ENCODE measurements at regions of chr6 and their contacts with region 1.

Region 1: GRCh38 chr6:17706580-17707370 is at the start of gene NUP153:
- DNase-seq: peak; percentile 94 to 100 (median 96)
- ATAC-seq: peak; percentile 78
- H3K4me3 ChIP-seq: peak within 1 kb of the TSS; percentile 80
- H3K27ac ChIP-seq: peak within 1 kb of the TSS; percentile 98
- H3K4me1 ChIP-seq: peaks cover 16 to 21% of the 10 kb centered on the region in 2 experiments
- H3K27me3 ChIP-seq: no peaks in the 10 kb centered on the region
- CTCF ChIP-seq: 0 out of 6 replicates have a peak, but pooled peaks of 1 of the 3 experiments have one; percentile 1
- EP300 ChIP-seq: peak; percentile 72
- POLR2A ChIP-seq: peak; percentile 83
- RAD21 ChIP-seq: peak; percentile 3 to 18; a peak in 1 of 4 replicates
- polyA plus RNA-seq, gene NUP153: 21.9 to 31.8 TPM

Region 2: GRCh38 chr6:17599885-17600526 is 106.8 kb before region 1 on chr6 and contains the start of gene FAM8A1:
- CTCF ChIA-PET with region 1: no interaction called
- POLR2A ChIA-PET with region 1: interaction called, 3 read pairs
- in situ Hi-C with region 1: no loop called
- intact Hi-C with region 1: loop called (anchors 2 kb)
- DNase-seq: peak; percentile 97 to 99 (median 98)
- ATAC-seq: peak; percentile 92
- H3K4me3 ChIP-seq: peak within 1 kb of the TSS; percentile 88
- H3K27ac ChIP-seq: peak within 1 kb of the TSS; percentile 91
- H3K4me1 ChIP-seq: peaks cover 5 to 18% of the 10 kb centered on the region in 2 experiments; a peak in 4 of 5 replicates
- H3K27me3 ChIP-seq: no peaks in the 10 kb centered on the region
- CTCF ChIP-seq: peak; percentile 60 to 82 (median 60); a peak in 5 of 6 replicates
- EP300 ChIP-seq: peak; percentile 64
- POLR2A ChIP-seq: peak; percentile 90
- RAD21 ChIP-seq: no peak
- polyA plus RNA-seq, gene FAM8A1: 4.9 to 6.1 TPM

Region 3: DNA sequence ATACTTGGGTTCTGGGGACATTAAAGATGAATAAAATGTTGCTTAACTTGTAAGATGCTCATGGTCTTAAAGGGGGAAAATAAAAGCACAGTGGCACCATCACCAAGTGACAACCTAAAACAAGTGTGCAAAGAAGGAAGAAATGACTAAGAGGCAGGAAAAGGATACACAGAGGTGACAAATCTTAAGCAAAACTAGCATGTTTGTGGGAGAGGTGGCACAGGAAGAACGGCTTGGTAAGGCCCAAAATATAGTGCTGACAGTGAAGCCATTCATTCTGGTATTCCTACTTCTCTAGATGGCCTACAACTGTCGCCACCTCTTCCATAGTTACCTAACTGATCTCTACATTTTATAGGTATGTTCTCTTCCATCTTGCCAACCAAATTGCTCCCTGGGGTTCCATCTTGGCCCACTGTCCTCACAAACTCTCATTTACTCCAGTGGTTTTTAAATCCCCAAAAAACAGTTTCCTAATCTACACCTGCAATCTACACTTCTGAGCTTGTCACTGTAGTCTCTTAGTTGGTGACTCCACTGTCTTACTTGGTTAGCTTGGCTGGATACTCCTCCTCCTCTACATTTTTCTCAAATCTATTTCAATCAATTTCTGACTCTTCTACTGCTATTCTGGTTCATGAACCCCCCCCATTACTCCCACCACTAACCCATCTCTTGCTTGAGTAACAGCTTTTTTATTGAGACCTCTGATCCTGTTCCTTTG is 73.1 kb before region 1 on chr6:
- CTCF ChIA-PET with region 1: no interaction called
- POLR2A ChIA-PET with region 1: no interaction called
- in situ Hi-C with region 1: no loop called
- intact Hi-C with region 1: no loop called
- DNase-seq: no peak
- ATAC-seq: peak; percentile 17; the same call in 2 of the 3 replicates
- H3K4me3 ChIP-seq: no peak overlapping the region
- H3K27ac ChIP-seq: no peak overlapping the region
- H3K4me1 ChIP-seq: no peaks in the 10 kb centered on the region; a peak in 1 of 5 replicates
- H3K27me3 ChIP-seq: no peaks in the 10 kb centered on the region
- CTCF ChIP-seq: no peak
- EP300 ChIP-seq: no peak
- POLR2A ChIP-seq: peak; percentile 27; the same call in 1 of the 2 replicates
- RAD21 ChIP-seq: no peak

Region 4: DNA sequence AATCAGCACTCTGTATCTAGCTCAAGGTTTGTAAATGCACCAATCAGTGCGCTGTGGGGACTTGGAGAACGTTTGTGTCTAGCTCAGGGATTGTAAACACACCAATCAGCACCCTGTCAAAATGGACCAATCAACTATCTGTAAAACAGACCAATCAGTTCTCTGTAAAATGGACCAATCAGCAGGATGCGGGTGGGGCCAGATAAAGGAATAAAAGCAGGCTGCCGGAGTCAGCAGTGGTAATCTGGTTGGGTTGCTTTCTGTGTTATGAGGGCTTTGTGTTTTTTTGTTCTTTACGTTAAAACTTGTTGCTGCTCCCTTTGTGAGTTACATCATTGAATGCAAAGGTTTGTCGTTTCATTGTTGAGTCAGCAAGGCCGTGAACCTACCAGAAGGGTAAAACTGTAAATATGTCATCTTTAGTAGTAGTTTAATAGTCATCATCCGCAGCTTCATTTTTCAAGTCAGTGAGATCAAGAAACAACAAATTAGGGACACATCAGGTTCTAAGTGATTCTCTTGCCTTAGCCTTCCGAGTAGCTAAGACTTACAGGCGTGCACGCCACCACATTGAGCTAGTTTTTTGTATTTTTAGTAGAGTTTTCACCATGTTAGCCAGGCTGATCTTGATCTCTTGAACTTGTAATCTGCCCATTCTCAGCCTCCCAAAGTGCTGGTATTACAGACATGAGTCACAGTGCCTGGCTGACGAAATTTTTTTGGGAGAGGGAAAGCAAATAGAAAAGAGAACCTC is 22.7 kb after region 1 on chr6:
- CTCF ChIA-PET with region 1: no interaction called
- POLR2A ChIA-PET with region 1: interaction called, 13 read pairs
- in situ Hi-C with region 1: no loop called
- intact Hi-C with region 1: no loop called
- DNase-seq: peak in 1 of 4 experiments; percentile 44
- ATAC-seq: peak; percentile 66
- H3K4me3 ChIP-seq: no peak overlapping the region
- H3K27ac ChIP-seq: peak overlapping the region; percentile 69
- H3K4me1 ChIP-seq: peaks cover 4 to 16% of the 10 kb centered on the region in 2 experiments
- H3K27me3 ChIP-seq: no peaks in the 10 kb centered on the region
- CTCF ChIP-seq: no peak
- EP300 ChIP-seq: peak; percentile 60; the same call in 1 of the 2 replicates
- POLR2A ChIP-seq: no peak; the same call in 1 of the 2 replicates
- RAD21 ChIP-seq: no peak

Region 5: GRCh38 chr6:17758119-17758518 is 51.3 kb after region 1 on chr6:
- CTCF ChIA-PET with region 1: no interaction called
- POLR2A ChIA-PET with region 1: interaction called, 10 read pairs
- in situ Hi-C with region 1: no loop called
- intact Hi-C with region 1: no loop called
- DNase-seq: no peak
- ATAC-seq: no peak
- H3K4me3 ChIP-seq: no peak overlapping the region
- H3K27ac ChIP-seq: no peak overlapping the region
- H3K4me1 ChIP-seq: no peaks in the 10 kb centered on the region; a peak in 1 of 5 replicates
- H3K27me3 ChIP-seq: no peaks in the 10 kb centered on the region
- CTCF ChIP-seq: no peak
- EP300 ChIP-seq: no peak
- POLR2A ChIP-seq: no peak
- RAD21 ChIP-seq: no peak

Region 6: GRCh38 chr6:17987576-17988421 is 281.0 kb after region 1 on chr6 and contains the start of gene KIF13A:
- CTCF ChIA-PET with region 1: no interaction called
- POLR2A ChIA-PET with region 1: no interaction called
- in situ Hi-C with region 1: no loop called
- intact Hi-C with region 1: loop called (anchors 10 kb)
- DNase-seq: peak; percentile 77 to 96 (median 92)
- ATAC-seq: peak; percentile 88
- H3K4me3 ChIP-seq: peak within 1 kb of the TSS; percentile 65
- H3K27ac ChIP-seq: peak within 1 kb of the TSS; percentile 79
- H3K4me1 ChIP-seq: peaks cover 12 to 20% of the 10 kb centered on the region in 2 experiments; a peak in 4 of 5 replicates
- H3K27me3 ChIP-seq: no peaks in the 10 kb centered on the region
- CTCF ChIP-seq: peak; percentile 32 to 45 (median 37)
- EP300 ChIP-seq: no peak; the same call in 1 of the 2 replicates
- POLR2A ChIP-seq: peak; percentile 51; the same call in 1 of the 2 replicates
- RAD21 ChIP-seq: peak; percentile 52 to 60
- polyA plus RNA-seq, gene KIF13A: 3.6 to 4.3 TPM

Region 7: DNA sequence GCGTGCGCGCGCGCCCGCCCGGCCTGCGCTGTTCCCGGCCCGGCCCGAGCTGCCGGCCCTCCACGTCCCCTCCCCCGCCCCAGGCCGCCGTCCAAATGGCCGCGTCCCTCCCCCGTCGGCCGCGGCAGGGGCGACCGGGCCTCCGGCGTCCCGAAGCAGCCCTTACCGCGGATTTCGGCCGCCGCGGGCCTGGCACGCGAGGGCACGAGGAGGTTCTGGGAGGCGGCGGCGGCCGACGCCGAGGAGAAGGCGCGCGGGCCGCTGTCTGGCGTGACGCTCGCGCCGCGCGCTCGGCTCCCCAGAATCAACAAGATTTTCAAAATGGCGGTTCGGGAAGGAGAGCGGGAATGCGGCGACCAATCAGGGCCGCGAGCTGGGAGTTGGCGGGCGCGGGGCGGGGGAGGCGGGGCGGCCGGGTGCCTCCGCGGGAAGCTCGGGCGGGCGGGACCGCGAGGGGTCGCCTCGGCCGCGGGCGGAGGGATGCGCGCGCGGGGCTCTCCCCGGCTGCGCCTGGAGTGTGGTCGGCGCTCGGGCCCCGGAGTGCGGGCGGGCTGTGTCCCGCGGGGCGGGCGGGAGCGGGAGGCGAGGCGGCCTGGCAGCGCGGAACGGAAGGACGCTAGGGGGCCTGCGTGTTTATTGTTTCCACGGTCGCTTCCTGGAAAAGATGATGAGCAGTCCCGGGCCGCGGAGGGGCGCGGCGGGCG is 557.6 kb after region 1 on chr6 and contains the start of gene DEK:
- CTCF ChIA-PET with region 1: no interaction called
- POLR2A ChIA-PET with region 1: no interaction called
- in situ Hi-C with region 1: no loop called
- intact Hi-C with region 1: loop called (anchors 5 kb)
- DNase-seq: peak; percentile 95 to 97 (median 96)
- ATAC-seq: peak; percentile 89
- H3K4me3 ChIP-seq: peak within 1 kb of the TSS; percentile 92
- H3K27ac ChIP-seq: peak within 1 kb of the TSS; percentile 97
- H3K4me1 ChIP-seq: peaks cover 21 to 36% of the 10 kb centered on the region in 2 experiments
- H3K27me3 ChIP-seq: no peaks in the 10 kb centered on the region
- CTCF ChIP-seq: peak; percentile 63 to 84 (median 76)
- EP300 ChIP-seq: no peak; the same call in 1 of the 2 replicates
- POLR2A ChIP-seq: peak; percentile 66; the same call in 1 of the 2 replicates
- RAD21 ChIP-seq: peak; percentile 60 to 61
- polyA plus RNA-seq, gene DEK: 82.3 to 87.3 TPM

Measured in K562 (cell line).